ENCODE measurements at regions of chr6 and their contacts with region 1.

Region 1: DNA sequence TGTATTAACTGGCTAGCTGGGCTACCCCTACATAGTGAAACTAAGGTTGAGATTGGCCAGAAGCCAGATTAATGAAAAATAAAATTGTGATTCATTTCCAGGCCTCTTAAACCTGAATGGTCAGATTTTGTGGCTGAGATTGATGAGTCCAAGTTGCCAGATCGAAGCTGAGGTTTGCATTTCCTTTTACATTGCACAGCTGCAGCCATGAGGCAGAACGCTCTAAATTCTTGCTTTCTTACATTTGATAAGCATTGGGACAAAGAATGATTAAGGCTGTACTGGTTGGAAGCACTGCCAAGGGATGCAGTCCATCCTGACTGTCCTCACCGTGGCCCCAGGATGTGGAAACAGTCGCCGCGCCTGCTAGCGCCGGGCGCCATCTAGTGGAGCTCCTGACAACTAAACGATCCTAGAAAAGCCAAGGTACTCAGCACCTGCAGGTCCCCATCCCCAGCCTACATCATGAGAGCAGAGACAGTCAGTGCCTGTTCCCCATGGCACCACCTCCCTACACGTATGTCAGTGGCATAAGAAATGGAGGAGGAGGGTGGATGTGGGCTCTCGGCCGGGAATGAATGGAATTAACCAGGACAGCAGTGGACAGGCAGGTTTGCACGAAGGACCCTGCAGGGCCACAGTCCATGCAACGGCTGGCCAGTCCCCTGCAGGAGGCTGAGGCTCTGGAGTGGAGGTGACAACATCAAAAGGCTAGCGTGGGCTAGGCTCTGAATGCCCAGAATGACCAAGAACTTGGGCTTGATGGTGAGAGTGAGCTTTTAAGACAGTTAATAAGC is 19.0 kb downstream of the PXDC1 start:
- DNase-seq: no peak
- H3K4me3 ChIP-seq: no peak overlapping the region
- CTCF ChIP-seq: peak; percentile 84

Region 2: GRCh38 chr6:3244003-3244831 is 488.3 kb before region 1 on chr6:
- CTCF ChIA-PET with region 1: no interaction called
- POLR2A ChIA-PET with region 1: no interaction called
- DNase-seq: no peak
- H3K4me3 ChIP-seq: no peak overlapping the region
- CTCF ChIP-seq: no peak

Region 3: DNA sequence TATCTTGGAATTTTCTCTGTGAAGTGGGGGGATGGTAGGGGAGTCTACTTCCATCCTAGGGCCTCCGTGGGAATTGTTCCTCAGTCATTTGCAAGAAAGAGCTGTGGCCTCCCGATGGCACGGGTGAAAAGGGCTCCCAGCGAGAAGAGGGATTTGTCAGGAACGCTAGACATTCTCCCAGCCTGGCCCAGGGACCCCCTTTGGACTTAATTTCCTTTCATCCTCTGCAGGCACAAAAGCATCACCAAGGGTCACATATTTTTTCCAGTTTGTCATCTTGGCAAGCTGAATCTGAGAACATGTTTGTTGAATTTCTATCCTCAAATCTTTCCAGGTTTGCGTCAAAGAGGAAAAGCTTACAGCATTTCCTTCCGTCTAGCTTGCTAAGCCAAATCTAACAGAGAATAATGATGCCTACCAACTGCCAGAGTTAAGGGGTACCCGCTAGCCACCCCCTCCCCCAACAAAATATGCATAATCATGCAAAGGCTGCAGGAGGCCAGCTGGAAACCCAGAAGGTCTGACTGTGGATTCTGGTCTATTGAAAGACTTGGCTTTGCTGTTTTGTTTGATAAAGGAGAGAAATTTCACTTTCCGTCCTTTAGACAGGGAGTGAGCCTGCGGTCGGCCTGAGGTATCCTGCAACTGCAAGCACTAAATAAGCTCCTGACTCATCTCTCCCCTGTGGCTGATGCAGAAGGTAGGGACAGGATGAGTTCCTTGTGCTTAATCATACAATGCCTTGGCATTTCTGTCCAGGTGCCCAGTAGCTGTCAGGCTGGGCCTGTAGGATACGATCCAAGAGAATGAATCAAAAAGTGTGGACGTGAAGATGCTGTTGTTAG is 450.7 kb before region 1 on chr6:
- CTCF ChIA-PET with region 1: interaction called, 263 read pairs
- POLR2A ChIA-PET with region 1: no interaction called
- DNase-seq: peak; percentile 37
- H3K4me3 ChIP-seq: no peak overlapping the region
- CTCF ChIP-seq: no peak

Region 4: DNA sequence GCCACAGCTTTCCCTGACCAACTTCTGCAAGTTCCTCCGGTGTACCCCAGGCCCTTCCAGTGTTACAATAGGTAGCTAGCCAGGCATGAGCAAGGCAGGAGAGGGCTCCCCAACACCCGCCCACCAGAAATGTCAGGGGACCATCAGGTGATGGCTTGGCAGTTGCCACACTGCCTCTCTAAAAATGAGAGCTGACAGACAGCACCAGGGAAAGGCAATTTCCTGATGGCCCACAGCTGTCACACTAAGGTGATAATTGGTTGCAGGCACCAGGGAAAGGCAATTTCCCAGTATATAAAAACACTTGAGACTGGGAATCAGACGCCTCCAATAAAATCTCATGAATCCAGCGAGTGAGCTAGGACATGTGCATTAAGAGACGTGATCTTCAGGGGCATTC is 30.9 kb before region 1 on chr6:
- CTCF ChIA-PET with region 1: interaction called, 11 read pairs
- POLR2A ChIA-PET with region 1: no interaction called
- DNase-seq: no peak
- H3K4me3 ChIP-seq: no peak overlapping the region
- CTCF ChIP-seq: no peak

Region 5: DNA sequence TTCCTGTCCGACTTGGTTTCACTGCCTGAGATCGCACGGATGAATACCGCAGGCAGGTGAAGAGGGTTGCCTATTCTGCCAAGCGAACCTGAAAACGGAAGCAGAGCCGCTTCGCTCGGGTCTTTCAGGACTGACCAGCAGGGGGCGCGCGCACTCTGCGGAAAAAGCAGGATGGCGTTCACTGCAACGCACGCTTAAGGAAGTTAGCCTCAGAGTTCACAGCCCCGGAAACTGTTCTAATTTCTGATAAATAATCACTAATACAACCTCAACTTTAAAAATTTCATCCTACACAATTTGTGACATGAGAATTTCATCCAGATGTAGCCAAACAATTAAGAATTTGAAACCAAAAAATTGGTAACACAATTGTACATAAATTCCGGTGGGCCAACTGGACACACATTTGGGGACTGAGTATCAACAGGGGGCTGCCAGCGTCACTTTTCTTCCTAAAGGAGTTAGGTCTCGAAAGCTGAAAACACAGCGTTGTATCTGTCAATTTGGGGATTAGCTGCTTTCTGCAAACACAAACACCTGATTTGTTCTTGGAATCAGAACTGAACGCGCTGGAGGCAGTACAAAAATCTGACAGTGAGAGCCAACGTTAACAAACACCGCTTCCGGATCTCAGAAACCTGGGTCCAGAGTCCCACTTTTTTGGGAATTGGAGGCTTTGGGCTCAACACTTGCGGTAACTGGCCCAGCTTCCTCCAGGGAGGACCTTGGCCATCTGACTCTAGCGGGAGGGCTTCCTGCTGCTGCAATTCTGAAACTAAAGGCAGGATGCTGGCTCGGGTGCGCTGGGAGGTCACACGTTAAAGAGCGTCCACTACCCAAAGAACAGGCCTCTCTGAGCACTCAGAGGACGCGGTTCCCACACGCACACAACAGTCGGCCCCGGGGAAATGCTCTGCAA is 10.1 kb after region 1 on chr6:
- CTCF ChIA-PET with region 1: interaction called, 32 read pairs
- POLR2A ChIA-PET with region 1: no interaction called
- DNase-seq: no peak
- H3K4me3 ChIP-seq: 0 out of 2 replicates have a peak overlapping the region, but pooled peaks have one; percentile 25
- CTCF ChIP-seq: peak; percentile 87

Region 6: GRCh38 chr6:3887150-3887700 is 154.7 kb after region 1 on chr6:
- CTCF ChIA-PET with region 1: interaction called, 15 read pairs
- POLR2A ChIA-PET with region 1: no interaction called
- DNase-seq: no peak
- H3K4me3 ChIP-seq: no peak overlapping the region
- CTCF ChIP-seq: peak; percentile 55